ENCODE measurements at regions of chr10 and their contacts with region 1.

Region 1: DNA sequence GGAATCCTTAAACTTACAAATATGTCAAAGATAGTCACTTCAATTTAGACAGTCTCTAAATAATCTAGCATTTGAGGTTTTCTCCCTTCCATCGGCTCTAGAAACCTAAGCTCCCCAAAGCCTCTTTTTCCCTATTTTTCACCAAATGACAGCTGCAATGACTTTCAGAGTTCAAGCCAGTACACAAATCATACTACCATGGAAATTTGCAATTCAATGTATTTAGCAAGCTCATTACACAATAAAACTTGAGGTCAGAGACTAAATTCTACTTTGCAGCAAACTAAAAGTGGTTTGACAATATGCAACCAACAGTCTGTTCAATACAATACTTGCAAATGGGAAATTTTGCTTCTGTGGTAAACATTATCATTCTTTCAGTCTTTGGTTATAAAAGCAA is 80.3 kb downstream of the SKIDA1 start:
- DNase-seq: no peak
- H3K4me3 ChIP-seq: no peak overlapping the region
- H3K27ac ChIP-seq: no peak overlapping the region
- H3K27me3 ChIP-seq: no peaks in the 10 kb centered on the region
- CTCF ChIP-seq: no peak

Region 2: DNA sequence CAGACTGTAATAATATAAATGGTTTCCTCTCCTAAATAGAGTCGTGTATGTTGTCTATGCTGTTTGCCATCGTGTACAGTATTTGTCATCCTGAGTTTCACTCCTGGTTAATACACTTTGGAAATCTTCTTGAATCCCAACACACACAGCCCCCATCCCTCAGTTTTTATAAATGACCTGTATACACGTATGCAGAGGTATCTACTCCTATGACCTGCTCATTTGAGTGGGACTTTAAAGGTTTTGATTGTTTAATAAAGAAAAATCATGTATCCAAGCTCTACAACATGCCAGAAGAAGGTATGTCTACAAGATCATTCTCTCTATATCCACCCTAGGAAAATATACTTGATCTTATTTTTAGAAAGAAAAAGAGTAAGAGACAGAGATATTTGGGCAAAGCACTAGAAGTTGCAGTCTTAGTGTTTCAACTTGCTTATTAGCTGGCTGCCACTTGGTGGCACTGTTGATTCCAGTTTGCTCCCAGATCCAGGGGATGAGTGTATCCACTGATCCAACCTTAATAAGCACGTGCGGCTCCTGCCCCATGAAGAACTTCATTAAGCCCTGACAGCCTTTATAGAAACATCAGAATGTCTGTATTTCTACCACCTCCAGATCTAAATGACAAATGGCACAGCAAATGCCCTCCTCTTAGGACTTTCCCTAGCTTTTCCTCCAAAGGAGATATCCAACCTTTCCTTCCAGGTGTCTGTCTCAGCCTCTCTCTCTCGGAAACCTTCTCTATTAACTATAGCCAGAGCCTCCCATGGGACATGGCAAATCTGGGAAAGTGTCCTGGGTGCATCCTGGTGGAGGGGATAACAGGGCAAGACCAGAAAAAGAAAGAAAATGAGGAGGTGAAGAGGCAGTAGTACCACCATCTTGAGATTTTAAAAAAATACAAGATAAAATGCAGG is 366.5 kb before region 1 on chr10:
- CTCF ChIA-PET with region 1: no interaction called
- POLR2A ChIA-PET with region 1: no interaction called
- DNase-seq: peak; percentile 15
- H3K4me3 ChIP-seq: no peak overlapping the region
- H3K27ac ChIP-seq: no peak overlapping the region
- H3K27me3 ChIP-seq: no peaks in the 10 kb centered on the region
- CTCF ChIP-seq: peak; percentile 87

Region 3: DNA sequence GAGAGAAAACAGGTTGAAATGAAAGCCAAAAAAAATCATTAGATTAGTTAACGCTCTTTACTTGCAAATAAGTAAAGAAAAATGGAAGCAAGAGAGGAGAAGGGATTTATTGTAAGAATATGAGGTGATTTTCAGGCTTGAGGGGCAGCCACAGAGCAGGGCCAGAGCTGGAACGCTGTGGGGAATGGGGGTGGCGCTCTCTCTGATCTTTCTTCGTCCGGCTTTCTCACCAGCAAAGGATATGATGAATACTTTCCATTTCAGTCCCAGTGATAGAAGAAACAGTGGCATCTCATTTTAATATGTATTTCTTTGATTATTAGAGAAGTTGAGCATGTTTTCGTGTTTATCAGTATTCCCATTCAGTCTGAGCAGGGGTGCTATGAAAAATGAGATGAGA is 31.9 kb before region 1 on chr10:
- CTCF ChIA-PET with region 1: interaction called, 11 read pairs
- POLR2A ChIA-PET with region 1: no interaction called
- DNase-seq: no peak
- H3K4me3 ChIP-seq: no peak overlapping the region
- H3K27ac ChIP-seq: no peak overlapping the region
- H3K27me3 ChIP-seq: no peaks in the 10 kb centered on the region
- CTCF ChIP-seq: no peak